ENCODE measurements at regions of chr5 and their contacts with region 1.

Region 1: GRCh38 chr5:65102828-65103711 is 334.3 kb downstream of the CWC27 start:
- DNase-seq: peak; percentile 74
- H3K4me3 ChIP-seq: peak overlapping the region; percentile 71
- H3K27ac ChIP-seq: peak overlapping the region; percentile 89
- H3K4me1 ChIP-seq: peaks cover 17% of the 10 kb centered on the region
- H3K27me3 ChIP-seq: no peaks in the 10 kb centered on the region
- CTCF ChIP-seq: peak; percentile 62

Region 2: GRCh38 chr5:64965613-64966012 is 137.5 kb before region 1 on chr5:
- intact Hi-C with region 1: loop called (anchors 10 kb)
- DNase-seq: no peak
- H3K4me3 ChIP-seq: no peak overlapping the region
- H3K27ac ChIP-seq: no peak overlapping the region
- H3K4me1 ChIP-seq: no peaks in the 10 kb centered on the region
- H3K27me3 ChIP-seq: no peaks in the 10 kb centered on the region
- CTCF ChIP-seq: no peak

Measured in left ventricle myocardium inferior (tissue), 1 donor.